Activated CD4-positive, alpha-beta T cell treated with anti-CD3 and anti-CD28 coated beads, Interleukin-2, amount 10 ng/mL, durations not matched to agents 7 days and 5 days (primary cell): ENCODE measurements at regions of chr20 and their contacts with region 1.

Region 1: DNA sequence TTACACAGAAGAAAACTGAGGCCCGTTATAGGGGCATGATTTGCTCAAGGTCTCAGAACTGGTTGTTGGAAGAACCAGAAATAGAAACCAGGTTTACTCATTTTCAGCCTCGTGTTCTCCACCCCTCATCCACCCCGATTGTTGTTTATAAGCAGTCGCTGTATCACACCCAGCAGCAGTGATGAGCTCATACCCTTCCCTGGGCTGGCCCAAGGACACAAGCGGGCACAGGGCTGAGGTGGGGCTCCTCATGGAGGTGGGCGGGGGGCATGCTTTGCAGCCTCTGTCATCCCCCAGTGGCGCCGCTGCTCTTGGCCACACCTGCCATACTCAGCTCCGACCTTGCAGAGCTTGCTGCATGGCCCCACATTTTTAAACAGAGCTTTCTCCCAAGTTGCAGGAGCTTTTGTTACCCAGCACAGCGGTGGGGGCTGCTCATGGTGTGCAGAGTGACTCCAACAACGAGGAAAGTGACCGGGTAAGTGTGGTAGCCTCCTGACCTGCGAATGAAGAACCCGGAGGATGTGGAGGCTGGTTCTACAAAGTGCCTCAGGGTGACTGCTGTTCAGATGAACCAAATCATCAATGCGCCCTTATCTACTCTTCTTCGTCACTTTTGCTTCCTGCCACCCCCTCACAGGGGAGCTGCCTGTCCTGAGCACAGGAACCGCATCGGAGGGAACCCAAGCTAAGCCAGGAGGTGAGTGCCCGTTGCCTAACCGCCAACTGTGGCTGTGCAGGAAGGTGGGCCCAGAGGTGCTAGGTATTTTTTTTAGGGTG is 43.6 kb upstream of the NKX2-2 start:
- DNase-seq: peak; percentile 12
- H3K4me3 Mint-ChIP-seq: peak overlapping the region; percentile 50
- H3K27ac Mint-ChIP-seq: peak overlapping the region; percentile 81
- H3K4me1 Mint-ChIP-seq: peaks cover 21% of the 10 kb centered on the region
- H3K27me3 Mint-ChIP-seq: peaks cover 2% of the 10 kb centered on the region

Region 2: DNA sequence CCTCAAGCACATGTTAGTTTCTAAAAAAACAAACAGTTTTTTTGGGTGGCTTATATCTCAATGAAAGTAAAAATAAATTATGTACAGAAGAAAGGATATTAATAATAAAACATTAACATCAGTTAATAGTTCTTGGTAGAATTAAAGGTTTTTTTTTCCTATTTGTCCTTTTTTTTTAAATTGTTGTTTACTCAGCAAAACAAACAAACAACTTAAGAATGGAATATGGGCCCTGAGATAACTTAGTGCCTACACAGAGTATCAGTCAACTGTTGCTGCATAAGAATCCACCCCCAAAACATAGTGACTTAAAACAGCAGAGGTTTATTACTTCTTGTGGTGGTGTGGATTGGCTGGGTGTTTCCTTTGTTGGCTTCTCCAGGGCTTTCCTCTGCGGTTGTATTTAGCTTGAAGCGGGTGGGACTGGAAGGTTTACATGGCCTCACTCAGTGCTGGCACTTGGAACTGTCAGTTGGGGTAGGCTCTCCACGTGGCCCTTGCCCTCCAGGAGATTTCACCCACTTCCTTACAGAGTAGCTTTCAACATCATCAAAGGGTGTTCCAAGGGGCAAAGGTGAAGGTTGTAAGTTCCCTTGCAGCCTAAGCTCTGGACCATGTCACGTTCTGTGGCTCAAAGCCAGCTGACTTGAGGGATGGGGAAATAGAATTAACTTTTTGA is 11.2 kb before region 1 on chr20:
- CTCF ChIA-PET with region 1: interaction called, 13 read pairs
- POLR2A ChIA-PET with region 1: no interaction called
- DNase-seq: no peak
- H3K4me3 Mint-ChIP-seq: no peak overlapping the region
- H3K27ac Mint-ChIP-seq: no peak overlapping the region
- H3K4me1 Mint-ChIP-seq: peaks cover 27% of the 10 kb centered on the region
- H3K27me3 Mint-ChIP-seq: no peaks in the 10 kb centered on the region

Region 3: DNA sequence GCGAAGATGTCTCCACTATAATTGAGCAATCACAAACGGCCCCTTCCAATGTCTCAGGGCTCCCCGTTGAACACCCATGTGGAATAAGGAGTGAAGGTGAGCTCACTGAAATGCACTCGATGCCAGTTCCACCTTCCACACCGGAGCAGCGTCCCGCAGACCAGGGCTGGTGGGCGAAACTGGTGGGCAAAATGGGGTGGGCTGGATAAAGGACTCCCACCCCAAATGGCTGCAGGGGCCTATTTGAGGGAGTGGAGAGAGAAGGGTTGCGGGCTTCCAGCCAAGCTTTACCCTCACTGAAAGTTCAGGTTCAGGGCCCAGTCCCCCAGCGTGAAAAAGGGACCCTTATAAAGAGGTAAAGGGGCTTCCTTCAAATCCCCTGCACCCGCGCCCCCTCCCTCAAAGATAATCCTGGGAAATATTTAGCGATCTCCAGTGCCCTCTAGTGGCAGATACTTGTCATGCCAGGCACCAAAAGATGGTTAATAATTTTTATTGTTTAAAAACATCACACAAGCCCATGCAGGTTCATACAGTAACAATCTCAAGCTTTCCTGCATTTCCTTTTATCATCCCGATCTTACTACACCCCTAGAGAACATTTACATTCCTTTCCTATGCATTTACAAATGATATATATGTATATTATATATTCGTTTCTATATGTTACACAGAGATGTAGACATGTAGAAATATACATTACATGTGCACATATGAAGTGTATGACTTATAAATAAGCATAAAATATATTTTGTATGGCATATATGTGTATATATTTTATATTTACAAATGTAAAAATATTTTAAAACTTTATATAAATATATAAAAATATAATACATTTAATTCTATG is 14.6 kb after region 1 on chr20:
- CTCF ChIA-PET with region 1: interaction called, 15 read pairs
- POLR2A ChIA-PET with region 1: no interaction called
- DNase-seq: no peak
- H3K4me3 Mint-ChIP-seq: no peak overlapping the region
- H3K27ac Mint-ChIP-seq: no peak overlapping the region
- H3K4me1 Mint-ChIP-seq: peaks cover 6% of the 10 kb centered on the region
- H3K27me3 Mint-ChIP-seq: peaks cover 12% of the 10 kb centered on the region